ENCODE measurements at regions of chr12 and their contacts with region 1.

Region 1: DNA sequence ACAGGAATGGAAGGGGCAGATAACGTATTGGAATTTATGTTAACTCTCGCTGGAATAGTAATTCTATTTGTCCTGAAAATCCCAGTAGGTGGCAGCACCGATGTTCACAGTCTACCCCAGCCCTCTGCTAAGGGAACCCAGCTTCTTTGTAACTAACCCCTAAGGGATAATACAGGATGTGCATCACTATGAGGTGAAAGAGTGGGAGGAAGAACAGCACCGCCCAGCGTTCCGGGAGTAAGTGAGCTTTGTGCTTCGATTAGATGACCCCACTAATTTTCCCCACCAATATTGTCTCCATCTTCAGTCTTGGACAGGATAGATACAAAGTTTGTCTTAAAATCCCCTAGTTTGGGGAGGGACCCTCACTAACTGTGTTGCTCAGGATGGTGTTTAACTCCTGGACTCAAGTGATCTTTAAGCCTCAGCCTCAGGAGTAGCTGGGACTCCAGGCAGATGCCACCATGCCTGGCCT is 2.7 kb downstream of the SLC2A3 start:
- DNase-seq: peak; percentile 73

Region 2: GRCh38 chr12:7959701-7960121 is 26.4 kb after region 1 on chr12:
- CTCF ChIA-PET with region 1: interaction called, 21 read pairs
- POLR2A ChIA-PET with region 1: interaction called, 43 read pairs
- DNase-seq: peak; percentile 8

Region 3: GRCh38 chr12:7995266-7995963 is 62.1 kb after region 1 on chr12:
- CTCF ChIA-PET with region 1: interaction called, 23 read pairs
- POLR2A ChIA-PET with region 1: interaction called, 4 read pairs
- DNase-seq: peak; percentile 46

Region 4: DNA sequence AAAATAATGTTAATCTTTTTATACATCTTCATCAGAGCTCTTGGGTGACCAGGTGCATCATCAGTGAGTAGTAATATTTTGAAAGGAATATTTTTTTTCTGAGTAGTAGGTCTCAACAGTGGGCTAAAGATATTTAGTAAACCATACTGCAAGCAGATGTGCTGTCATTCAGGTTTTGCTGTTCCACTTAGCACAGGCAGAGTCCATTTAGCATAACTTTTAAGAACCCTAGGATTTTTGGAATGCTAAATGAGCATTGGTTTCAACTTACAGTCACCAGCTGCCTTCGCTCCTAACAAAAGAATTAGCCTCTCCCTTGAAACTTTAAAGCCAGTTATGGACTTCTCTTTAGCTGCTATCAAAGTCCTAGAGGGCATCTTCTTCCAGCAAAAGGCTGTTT is 789.0 kb after region 1 on chr12:
- CTCF ChIA-PET with region 1: no interaction called
- POLR2A ChIA-PET with region 1: no interaction called
- DNase-seq: no peak